Mammary epithelial cell (primary cell): ENCODE measurements at regions of chr7 and their contacts with region 1.

Region 1: DNA sequence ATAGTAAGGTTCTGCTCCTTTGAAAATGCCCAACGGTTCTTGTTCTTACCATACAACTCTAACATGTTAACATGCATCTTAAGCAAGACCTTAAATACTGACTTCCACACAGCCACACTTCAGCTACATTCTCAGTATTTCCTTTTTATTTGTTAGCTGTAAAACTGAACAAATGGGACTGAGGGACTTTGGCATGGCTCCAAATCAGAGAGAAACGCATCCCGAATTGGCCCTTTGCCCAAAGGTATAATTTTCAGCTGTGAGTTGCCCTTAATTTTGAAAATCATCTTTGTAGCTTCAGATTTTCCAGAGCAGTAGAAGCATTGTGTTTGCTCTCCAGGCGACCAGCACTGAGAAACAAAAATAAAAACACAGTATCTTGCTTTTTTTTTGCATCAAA is 56.4 kb downstream of the NEUROD6 start:
- DNase-seq: no peak
- H3K4me3 ChIP-seq: no peak overlapping the region
- H3K27ac ChIP-seq: no peak overlapping the region
- H3K4me1 ChIP-seq: no peaks in the 10 kb centered on the region
- H3K27me3 ChIP-seq: no peaks in the 10 kb centered on the region
- CTCF ChIP-seq: no peak

Region 2: GRCh38 chr7:31228957-31229356 is 55.1 kb before region 1 on chr7:
- CTCF ChIA-PET with region 1: no interaction called
- dilution Hi-C with region 1: loop called (anchors 5 kb)
- in situ Hi-C with region 1: no loop called
- intact Hi-C with region 1: no loop called
- DNase-seq: no peak
- H3K4me3 ChIP-seq: no peak overlapping the region
- H3K27ac ChIP-seq: no peak overlapping the region
- H3K4me1 ChIP-seq: no peaks in the 10 kb centered on the region
- H3K27me3 ChIP-seq: no peaks in the 10 kb centered on the region
- CTCF ChIP-seq: no peak